Gastrocnemius medialis (tissue), 4 donors: ENCODE measurements at regions of chr3 and their contacts with region 1.

Region 1: DNA sequence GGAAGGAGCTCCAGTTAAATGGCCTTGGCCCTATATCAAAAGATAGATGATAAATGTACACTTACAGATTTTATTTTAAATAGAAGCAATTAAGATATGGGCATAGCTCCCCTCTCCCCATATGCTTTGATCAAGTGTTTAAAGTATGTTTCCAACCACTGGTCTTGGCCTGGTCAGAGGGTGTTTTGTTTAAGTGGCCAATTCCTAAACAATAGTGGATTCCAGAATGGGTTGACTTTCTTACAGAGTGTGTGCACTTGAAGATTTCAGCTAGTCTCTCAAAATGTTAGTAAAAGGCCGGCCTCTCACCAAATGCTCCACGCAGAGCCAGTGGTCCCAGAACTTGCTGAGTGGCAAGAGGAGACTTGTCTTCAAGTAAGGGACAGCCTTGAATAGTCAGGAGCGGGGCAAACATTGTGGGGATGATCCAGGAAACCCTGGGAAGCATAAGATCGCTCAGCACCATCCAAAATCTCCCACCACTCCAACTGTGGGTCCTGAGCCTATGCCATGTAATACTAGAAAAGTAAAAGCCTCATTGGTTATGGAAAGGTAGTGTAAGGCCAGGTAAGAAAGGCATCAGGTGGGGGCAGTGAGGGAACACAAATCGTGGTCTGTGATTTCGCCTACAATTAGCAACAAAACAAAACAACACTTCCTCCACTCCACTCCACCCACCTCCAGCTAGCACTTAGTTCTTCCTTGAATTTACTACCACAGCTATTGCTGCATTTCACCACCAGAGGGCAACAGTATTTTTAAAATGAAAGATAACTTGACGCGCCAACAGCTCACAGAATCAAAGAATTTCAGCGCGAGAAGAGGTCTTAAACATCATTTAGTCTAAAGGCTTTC is 4.8 kb downstream of the RARRES1 start:
- DNase-seq: peak in 1 of 2 donors; percentile 41
- ATAC-seq: peak; percentile 57 to 59
- H3K4me3 ChIP-seq: peak overlapping the region in 2 of 4 donors; percentile 14 to 24
- H3K27ac ChIP-seq: peak overlapping the region in 1 of 4 donors; percentile 57
- H3K4me1 ChIP-seq: peaks cover 12 to 27% of the 10 kb centered on the region in 2 donors
- H3K27me3 ChIP-seq: no peaks in the 10 kb centered on the region
- CTCF ChIP-seq: peak; percentile 64 to 83 (median 79)
- POLR2A ChIP-seq: no peak

Region 2: DNA sequence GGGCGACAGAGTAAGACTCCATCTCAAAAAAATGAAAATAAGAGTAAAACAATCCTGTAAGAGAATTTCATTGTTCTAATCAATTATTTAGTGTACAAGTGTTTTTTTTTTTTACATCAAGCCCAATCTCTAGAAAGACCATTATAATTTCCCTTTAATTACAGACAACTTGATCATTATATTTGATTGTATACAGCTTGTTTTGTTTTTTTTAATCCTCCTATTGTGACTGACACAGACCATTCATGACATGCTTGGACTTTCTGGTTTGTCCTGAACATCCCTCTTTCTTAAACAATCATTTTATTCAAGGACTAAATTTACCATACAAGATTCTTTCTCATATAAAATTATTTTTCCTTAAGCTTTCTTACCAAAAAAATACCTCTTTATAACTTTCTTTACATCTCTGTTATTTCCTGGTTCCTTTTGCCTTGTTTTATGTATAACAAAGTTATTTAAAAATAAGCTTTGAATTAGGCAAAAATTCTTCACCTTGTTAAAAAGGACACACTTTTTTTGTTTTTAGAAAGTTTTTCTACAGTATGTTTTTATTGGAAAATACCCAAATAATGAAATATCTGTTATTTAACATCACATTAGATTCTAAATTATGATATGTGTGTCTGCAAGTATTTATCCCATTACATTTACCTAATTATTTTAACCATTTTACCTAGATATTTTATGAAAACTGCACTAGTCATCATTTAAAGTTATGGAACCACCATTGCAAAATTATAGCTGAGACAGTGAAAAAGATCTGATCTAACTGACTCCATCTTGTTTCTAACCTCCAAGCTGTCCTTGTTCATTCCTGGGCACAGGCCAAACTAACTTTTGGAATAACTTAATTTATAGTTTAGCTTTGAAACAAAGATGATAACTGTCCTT is 109.2 kb before region 1 on chr3:
- in situ Hi-C with region 1: no loop called
- intact Hi-C with region 1: no loop called
- DNase-seq: no peak
- ATAC-seq: no peak
- H3K4me3 ChIP-seq: no peak overlapping the region
- H3K27ac ChIP-seq: no peak overlapping the region
- H3K4me1 ChIP-seq: no peaks in the 10 kb centered on the region
- H3K27me3 ChIP-seq: no peaks in the 10 kb centered on the region
- CTCF ChIP-seq: no peak
- POLR2A ChIP-seq: no peak

Region 3: GRCh38 chr3:158773845-158774830 is 46.7 kb after region 1 on chr3:
- in situ Hi-C with region 1: no loop called
- intact Hi-C with region 1: loop called (anchors 5 kb)
- DNase-seq: no peak
- ATAC-seq: peak in 1 of 2 donors; percentile 27
- H3K4me3 ChIP-seq: no peak overlapping the region
- H3K27ac ChIP-seq: no peak overlapping the region
- H3K4me1 ChIP-seq: peaks cover 0 to 11% of the 10 kb centered on the region in 2 donors
- H3K27me3 ChIP-seq: no peaks in the 10 kb centered on the region
- CTCF ChIP-seq: no peak
- POLR2A ChIP-seq: no peak

Region 4: GRCh38 chr3:158790901-158791589 is 63.6 kb after region 1 on chr3:
- in situ Hi-C with region 1: loop called (anchors 5 kb)
- intact Hi-C with region 1: loop called (anchors 1 kb)
- DNase-seq: no peak
- ATAC-seq: no peak
- H3K4me3 ChIP-seq: peak overlapping the region in 3 of 4 donors; percentile 10 to 29 (median 14)
- H3K27ac ChIP-seq: no peak overlapping the region
- H3K4me1 ChIP-seq: peaks cover 0 to 4% of the 10 kb centered on the region in 2 donors
- H3K27me3 ChIP-seq: no peaks in the 10 kb centered on the region
- CTCF ChIP-seq: peak; percentile 34 to 73 (median 58)
- POLR2A ChIP-seq: no peak

Region 5: DNA sequence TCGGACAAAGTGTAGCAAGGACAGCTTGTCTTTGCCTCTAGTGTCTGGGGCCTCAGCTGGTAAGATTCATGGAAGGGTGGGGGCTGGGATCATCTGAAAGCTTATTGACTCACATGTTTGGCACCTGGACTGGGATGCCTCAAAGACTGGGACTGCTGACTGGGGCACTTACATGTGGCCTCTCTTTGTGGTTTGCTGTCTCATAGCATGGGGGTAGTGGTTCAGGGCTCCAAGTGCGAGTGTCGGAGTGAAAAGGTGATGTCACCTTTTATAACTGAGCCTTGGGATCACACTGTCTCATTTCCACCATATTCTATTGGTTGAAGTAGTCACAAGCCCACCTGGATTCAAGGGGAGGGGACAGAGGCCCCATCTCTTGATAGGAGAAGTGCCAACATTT is 81.3 kb after region 1 on chr3:
- in situ Hi-C with region 1: no loop called
- intact Hi-C with region 1: no loop called
- DNase-seq: no peak
- ATAC-seq: no peak
- H3K4me3 ChIP-seq: no peak overlapping the region
- H3K27ac ChIP-seq: no peak overlapping the region
- H3K4me1 ChIP-seq: peaks cover 0 to 7% of the 10 kb centered on the region in 2 donors
- H3K27me3 ChIP-seq: no peaks in the 10 kb centered on the region
- CTCF ChIP-seq: no peak
- POLR2A ChIP-seq: no peak